Ovary (tissue), 10 donors: ENCODE measurements at regions of chr15 and their contacts with region 1.

Region 1: GRCh38 chr15:39391230-39391629 is 189.6 kb upstream of the THBS1 start:
- DNase-seq: no peak
- H3K4me3 ChIP-seq: no peak overlapping the region
- H3K27ac ChIP-seq: no peak overlapping the region
- H3K4me1 ChIP-seq: no peaks in the 10 kb centered on the region
- H3K27me3 ChIP-seq: no peaks in the 10 kb centered on the region
- CTCF ChIP-seq: no peak
- EP300 ChIP-seq: no peak
- POLR2A ChIP-seq: no peak

Region 2: DNA sequence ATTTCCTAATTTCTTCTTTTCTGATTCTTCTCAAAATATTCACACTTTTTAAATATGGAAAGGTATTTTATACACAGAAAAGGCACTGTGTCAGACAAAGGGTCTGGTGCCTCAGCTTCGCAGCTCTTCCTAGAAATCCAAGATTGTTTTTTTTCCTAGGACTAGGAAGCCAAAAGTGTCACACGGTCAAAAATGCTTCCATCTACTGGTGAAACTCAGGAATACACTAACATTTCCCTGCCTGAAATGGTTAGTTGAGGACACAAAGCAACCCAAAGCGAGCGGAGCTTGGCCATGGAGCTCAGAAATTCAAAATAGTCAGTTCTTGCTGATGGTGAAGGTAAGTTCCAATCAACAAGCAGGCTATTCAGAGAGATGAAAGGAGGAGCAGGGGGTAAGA is 400.1 kb before region 1 on chr15:
- intact Hi-C with region 1: loop called in 1 of 4 experiments (anchors 10 kb)
- DNase-seq: no peak
- H3K4me3 ChIP-seq: no peak overlapping the region
- H3K27ac ChIP-seq: no peak overlapping the region
- H3K4me1 ChIP-seq: no peaks in the 10 kb centered on the region
- H3K27me3 ChIP-seq: no peaks in the 10 kb centered on the region
- CTCF ChIP-seq: peak in 1 of 3 donors; percentile 37
- EP300 ChIP-seq: no peak
- POLR2A ChIP-seq: no peak

Region 3: GRCh38 chr15:39336926-39337325 is 54.3 kb before region 1 on chr15:
- intact Hi-C with region 1: no loop called
- DNase-seq: no peak
- H3K4me3 ChIP-seq: no peak overlapping the region
- H3K27ac ChIP-seq: no peak overlapping the region
- H3K4me1 ChIP-seq: peaks cover 5% of the 10 kb centered on the region
- H3K27me3 ChIP-seq: no peaks in the 10 kb centered on the region
- CTCF ChIP-seq: no peak
- EP300 ChIP-seq: no peak
- POLR2A ChIP-seq: no peak

Region 4: GRCh38 chr15:39944726-39945125 is 553.5 kb after region 1 on chr15:
- intact Hi-C with region 1: no loop called
- DNase-seq: no peak
- H3K4me3 ChIP-seq: no peak overlapping the region
- H3K27ac ChIP-seq: peak overlapping the region in 1 of 2 donors; percentile 9
- H3K4me1 ChIP-seq: no peaks in the 10 kb centered on the region
- H3K27me3 ChIP-seq: no peaks in the 10 kb centered on the region
- CTCF ChIP-seq: no peak
- EP300 ChIP-seq: no peak
- POLR2A ChIP-seq: no peak